ENCODE measurements at regions of chrX and their contacts with region 1.

Region 1: DNA sequence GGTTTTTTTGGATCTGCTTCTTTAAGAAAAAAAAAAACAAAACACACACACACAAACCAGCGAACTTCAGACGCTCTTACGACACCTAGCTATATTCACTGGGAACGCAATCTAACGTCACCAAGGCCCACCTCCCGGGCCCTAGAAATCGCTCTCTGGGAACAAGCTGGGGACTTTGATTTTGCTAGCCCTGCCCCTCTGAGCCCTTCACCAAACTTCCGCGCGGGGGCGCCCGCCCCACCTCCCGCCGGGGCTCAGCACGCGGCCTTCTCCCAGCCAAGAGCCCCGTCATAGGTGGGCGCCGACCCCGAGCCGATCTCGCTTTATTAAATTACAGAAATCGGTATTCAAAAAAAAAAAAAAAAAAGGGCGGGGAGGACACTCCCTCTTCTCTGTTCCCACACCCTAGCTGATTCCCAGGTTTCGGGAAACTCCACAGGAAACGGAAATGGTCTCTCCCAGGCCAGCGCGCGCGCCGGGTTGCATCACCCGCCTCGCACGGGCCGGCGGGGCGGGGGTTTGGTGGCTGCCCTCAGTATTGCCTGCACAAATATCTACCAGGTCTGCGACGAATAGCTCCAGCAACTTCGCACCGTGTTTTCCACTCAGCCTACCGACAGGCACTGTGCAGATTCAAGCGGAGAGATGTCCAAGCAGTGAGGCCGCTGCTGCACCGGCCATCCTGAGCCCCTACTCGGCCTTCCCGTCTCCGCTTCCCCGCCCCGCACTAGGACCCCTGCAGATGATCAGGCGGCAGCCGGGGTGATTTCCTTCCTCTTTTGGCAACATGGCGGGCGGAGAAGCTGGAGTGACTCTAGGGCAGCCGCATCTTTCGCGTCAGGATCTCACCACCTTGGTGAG is at the start of gene EIF2S3:
- DNase-seq: peak; percentile 89
- H3K4me3 Mint-ChIP-seq: no peak within 1 kb of the TSS
- H3K27ac Mint-ChIP-seq: no peak within 1 kb of the TSS
- H3K4me1 Mint-ChIP-seq: peaks cover 11% of the 10 kb centered on the region
- H3K27me3 Mint-ChIP-seq: no peaks in the 10 kb centered on the region

Region 2: DNA sequence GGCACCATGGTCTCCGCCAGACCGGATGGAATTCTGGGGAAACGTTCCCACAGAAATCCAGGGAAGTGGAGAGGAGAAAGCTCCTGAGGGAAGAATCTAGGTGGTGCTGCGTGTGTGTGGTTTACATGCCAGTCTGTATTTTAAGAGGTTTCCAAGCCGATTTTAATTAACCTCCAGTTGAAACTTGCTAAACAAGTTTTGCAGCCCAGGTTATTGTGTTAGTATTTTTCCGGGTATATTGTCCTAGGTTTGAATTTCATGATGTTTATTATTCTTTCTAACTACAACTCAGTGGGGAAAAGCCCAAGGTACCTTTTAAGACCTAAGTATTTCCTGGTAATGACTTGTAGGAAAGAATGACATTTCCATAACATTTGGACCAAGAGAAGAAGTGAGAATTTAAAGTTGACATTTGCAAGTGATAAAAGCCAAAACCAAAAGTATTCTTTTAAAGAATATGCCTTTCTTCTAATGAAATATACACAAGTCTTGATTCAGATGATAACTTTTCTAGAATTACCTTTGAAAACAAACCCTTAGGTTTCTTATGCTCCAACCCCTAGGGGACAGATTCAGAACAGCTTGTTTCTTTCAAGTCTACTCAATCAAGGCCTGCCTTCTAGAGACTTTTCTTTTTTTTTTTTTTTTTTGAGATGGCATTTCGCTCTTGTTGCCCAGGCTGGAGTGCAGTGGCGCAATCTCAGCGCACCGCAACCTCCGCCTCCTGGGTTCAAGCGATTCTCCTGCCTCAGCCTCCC is 256.9 kb before region 1 on chrX:
- CTCF ChIA-PET with region 1: no interaction called
- DNase-seq: no peak
- H3K4me3 Mint-ChIP-seq: no peak overlapping the region
- H3K27ac Mint-ChIP-seq: no peak overlapping the region
- H3K4me1 Mint-ChIP-seq: peaks cover 3% of the 10 kb centered on the region
- H3K27me3 Mint-ChIP-seq: no peaks in the 10 kb centered on the region

Region 3: DNA sequence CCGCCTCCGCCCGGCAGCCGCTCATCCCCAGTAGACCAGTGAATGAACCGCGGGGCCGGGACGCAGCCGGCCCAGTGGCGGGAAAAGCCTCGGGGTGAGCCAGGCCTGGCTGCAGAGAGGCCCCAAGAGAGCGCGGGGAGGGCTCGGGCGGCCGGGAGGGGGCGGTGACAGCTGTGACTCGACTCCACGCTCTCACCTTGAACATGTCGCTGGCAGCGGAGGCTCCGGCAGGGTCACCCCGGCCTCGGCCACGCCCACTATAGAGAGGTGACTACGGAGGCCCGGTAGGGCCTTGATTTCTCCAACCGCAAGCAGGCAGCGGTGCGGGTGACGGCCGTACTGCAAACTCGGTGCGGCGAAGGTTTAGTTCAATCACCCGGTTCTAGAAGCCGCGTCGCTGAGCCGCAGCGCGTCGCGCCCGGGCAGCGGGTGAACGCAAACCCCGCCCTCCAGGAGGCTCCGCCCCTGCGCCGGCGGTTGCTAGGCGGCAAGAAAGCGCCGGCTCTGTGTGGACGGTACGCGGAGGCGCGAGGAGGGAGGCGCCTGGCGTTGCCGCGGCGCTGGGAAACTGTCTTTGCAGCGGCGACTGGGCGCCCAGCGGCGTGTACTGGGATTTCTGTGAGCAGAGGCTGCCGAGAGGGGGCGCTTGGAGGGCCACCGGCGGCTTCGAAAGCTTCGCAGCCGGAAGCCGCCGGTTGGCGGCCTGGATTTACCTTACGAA is 146.8 kb before region 1 on chrX and contains the starts of genes APOO and CXorf58:
- CTCF ChIA-PET with region 1: interaction called, 19 read pairs
- DNase-seq: peak; percentile 93
- H3K4me3 Mint-ChIP-seq: peak within 1 kb of the TSS; percentile 78
- H3K27ac Mint-ChIP-seq: peak within 1 kb of the TSS; percentile 92
- H3K4me1 Mint-ChIP-seq: peaks cover 20% of the 10 kb centered on the region
- H3K27me3 Mint-ChIP-seq: no peaks in the 10 kb centered on the region

Region 4: DNA sequence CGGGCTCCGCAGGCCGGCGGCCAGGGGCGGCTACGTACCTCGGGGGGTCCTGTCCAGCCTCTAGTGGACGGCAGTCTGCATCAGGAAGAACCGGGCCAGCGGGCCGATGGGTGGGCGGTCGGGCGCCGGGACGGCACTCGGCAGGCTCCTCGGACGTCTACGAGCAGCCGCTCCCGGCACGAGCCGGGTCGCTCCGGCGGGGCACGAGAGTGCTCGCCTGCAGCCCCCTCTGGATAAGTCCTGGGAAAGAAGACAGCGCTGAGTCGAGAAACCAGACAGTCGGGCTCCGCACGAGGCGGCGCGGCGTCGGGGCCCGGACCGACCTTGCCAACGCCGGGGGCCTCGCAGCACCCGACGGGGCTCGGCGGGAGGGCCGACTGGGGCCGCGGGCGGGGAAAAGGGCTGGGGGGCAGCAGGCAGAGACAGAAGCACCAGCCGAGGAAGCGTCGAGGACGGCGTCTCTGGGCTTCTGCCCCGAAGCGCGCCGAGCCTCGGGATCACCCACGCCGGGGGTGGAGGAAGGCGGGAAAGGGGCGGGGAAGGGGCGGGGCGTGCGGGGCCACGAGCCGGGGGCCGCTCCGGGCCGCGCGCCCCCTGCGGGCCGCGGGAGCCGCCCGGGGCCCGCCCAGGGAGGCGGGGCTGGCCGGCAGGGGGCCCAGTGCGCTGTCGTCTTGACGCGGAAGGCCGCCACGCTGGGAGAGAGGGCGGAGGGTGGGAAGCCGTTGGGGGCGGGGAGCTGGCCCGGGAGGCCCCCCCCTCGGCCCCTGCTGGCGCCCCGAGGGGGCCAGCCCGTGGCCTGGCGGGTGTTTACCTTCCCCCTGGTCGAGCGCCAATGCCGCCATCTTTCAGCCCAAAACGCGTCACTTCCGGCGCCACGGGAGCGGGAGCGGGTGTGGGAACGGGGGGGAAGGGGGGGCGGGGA is 29.3 kb before region 1 on chrX:
- CTCF ChIA-PET with region 1: interaction called, 10 read pairs
- DNase-seq: peak; percentile 85
- H3K4me3 Mint-ChIP-seq: peak overlapping the region; percentile 85
- H3K27ac Mint-ChIP-seq: peak overlapping the region; percentile 94
- H3K4me1 Mint-ChIP-seq: peaks cover 32% of the 10 kb centered on the region
- H3K27me3 Mint-ChIP-seq: peaks cover 3% of the 10 kb centered on the region

Region 5: GRCh38 chrX:24184018-24184417 is 129.6 kb after region 1 on chrX:
- CTCF ChIA-PET with region 1: no interaction called
- DNase-seq: no peak
- H3K4me3 Mint-ChIP-seq: no peak overlapping the region
- H3K27ac Mint-ChIP-seq: peak overlapping the region; percentile 1
- H3K4me1 Mint-ChIP-seq: peaks cover 11% of the 10 kb centered on the region
- H3K27me3 Mint-ChIP-seq: no peaks in the 10 kb centered on the region

Region 6: DNA sequence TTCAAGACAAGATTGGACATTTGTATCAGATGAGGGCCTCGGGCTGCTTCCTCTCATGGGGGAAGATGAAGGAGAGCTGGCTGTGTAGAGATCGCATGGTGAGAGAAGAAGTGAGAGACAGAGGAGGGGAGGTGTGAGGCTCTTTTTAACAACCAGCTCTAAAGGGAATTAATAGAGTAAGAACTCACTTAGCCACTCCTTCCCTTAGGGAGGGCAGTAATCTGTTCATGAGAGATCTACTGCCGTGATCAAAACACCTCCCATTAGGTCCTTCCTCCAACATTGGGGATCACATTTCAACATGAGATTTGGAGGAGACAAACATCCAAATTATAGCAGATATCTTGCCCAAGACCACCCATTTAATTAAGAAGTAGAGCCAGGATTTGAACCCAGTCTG is 864.3 kb after region 1 on chrX:
- CTCF ChIA-PET with region 1: no interaction called
- DNase-seq: no peak
- H3K4me3 Mint-ChIP-seq: no peak overlapping the region
- H3K27ac Mint-ChIP-seq: no peak overlapping the region
- H3K4me1 Mint-ChIP-seq: no peaks in the 10 kb centered on the region
- H3K27me3 Mint-ChIP-seq: no peaks in the 10 kb centered on the region